ENCODE measurements at regions of chr11 and their contacts with region 1.

Region 1: GRCh38 chr11:18721561-18722292 is 4.3 kb downstream of the IGSF22 start:
- DNase-seq: no peak
- ATAC-seq: peak; percentile 91
- H3K4me3 ChIP-seq: peak overlapping the region; percentile 71
- H3K27ac ChIP-seq: no peak overlapping the region
- H3K4me1 ChIP-seq: peaks cover 9% of the 10 kb centered on the region
- H3K27me3 ChIP-seq: no peaks in the 10 kb centered on the region; a peak in 3 of 4 replicates
- CTCF ChIP-seq: peak; percentile 78 to 92 (median 87)
- EP300 ChIP-seq: no peak
- POLR2A ChIP-seq: no peak
- RAD21 ChIP-seq: peak; percentile 35

Region 2: DNA sequence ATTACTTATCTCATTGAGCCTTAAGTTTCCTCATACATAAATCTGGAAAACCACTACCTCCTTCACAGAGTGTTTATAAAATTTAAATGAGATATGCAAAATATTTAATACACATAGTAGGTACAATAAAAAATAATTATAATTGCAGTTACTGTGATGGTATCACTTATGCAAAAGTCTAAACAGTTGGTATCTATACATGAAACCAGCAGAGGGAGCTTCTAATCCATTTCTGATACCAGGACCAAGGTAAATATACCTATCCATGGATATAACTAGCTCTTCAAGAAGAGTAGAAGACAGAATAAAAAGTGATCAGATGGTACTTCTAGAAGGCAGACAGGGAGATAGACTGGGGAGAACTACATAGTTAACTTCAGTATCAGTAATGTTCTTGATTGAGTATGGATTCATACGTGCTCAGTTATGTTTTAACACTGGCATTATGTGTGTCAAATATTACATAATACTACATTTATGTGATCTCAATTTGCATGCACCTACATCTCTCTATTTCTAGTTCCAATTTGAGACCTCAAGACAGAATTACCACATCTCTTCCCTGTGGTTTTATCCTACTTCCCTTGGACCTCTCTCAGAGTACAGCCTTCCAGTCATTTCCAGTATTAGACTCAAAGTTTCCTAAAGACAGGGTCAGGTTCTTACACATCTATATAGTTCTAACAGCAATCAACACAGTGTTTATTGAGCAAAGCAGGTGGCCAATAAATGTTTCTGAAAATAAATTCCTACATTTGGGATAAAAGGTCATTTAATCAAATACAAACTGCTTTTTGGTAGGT is 181.3 kb before region 1 on chr11:
- CTCF ChIA-PET with region 1: interaction called, 36 read pairs
- POLR2A ChIA-PET with region 1: interaction called, 3 read pairs
- RAD21 ChIA-PET with region 1: interaction called, 26 read pairs
- SMC1A ChIA-PET with region 1: interaction called, 15 read pairs
- in situ Hi-C with region 1: no loop called
- intact Hi-C with region 1: no loop called
- DNase-seq: no peak
- ATAC-seq: peak; percentile 84
- H3K4me3 ChIP-seq: no peak overlapping the region
- H3K27ac ChIP-seq: no peak overlapping the region
- H3K4me1 ChIP-seq: no peaks in the 10 kb centered on the region
- H3K27me3 ChIP-seq: no peaks in the 10 kb centered on the region
- CTCF ChIP-seq: peak; percentile 46 to 69 (median 56)
- EP300 ChIP-seq: no peak
- POLR2A ChIP-seq: no peak
- RAD21 ChIP-seq: peak; percentile 66

Region 3: DNA sequence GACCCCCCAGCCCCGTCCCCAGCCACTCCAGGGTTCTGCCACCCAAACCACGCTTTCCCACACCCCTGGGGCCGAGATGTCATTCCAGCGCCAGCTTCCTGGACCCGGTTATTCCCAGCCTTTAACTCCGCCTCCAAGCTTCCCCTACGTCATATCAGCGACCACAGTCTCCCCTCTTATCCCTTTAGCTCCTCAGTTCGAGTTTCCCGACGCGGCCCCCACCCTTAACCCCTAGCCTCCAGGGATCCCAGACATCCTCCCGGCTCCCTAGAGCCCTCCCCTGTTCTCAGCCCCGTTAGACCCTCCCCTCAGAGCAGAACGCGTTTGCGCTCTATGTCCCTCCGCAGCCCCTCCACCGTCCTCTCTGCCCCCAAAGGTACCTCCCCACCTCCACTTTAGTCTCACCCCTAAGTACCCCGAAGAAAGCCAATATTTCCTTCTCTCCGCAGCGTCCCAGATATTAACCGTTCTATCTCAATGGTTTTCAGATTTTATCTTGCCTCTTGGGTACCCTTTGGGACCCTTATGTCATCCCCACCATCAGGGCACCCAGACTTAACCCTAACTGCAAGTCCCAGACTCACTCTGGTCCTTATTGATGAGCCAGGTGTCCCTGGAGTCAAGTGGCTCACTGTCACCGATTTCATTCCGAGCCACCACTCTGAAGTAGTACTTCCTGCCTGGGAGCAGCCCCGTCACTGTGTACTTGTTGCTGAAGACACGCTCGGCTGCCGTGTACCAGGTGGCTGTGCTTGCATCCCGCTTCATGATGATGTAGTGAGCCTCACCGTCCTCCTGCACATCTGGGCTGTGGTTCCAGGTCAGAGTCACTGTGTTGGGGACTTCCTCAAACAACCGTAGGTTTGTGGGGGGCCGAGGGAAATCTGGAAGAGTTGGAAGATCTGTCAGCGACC is 15.1 kb before region 1 on chr11:
- CTCF ChIA-PET with region 1: interaction called, 22 read pairs
- POLR2A ChIA-PET with region 1: interaction called, 3 read pairs
- RAD21 ChIA-PET with region 1: interaction called, 5 read pairs
- SMC1A ChIA-PET with region 1: interaction called, 3 read pairs
- in situ Hi-C with region 1: no loop called
- intact Hi-C with region 1: no loop called
- DNase-seq: no peak
- ATAC-seq: peak; percentile 55
- H3K4me3 ChIP-seq: no peak overlapping the region
- H3K27ac ChIP-seq: no peak overlapping the region
- H3K4me1 ChIP-seq: 0 out of 2 replicates have a peak, but pooled peaks cover 3% of the 10 kb centered on the region
- H3K27me3 ChIP-seq: peaks cover 6 to 10% of the 10 kb centered on the region in 2 experiments
- CTCF ChIP-seq: no peak
- EP300 ChIP-seq: no peak
- POLR2A ChIP-seq: no peak
- RAD21 ChIP-seq: no peak

Region 4: DNA sequence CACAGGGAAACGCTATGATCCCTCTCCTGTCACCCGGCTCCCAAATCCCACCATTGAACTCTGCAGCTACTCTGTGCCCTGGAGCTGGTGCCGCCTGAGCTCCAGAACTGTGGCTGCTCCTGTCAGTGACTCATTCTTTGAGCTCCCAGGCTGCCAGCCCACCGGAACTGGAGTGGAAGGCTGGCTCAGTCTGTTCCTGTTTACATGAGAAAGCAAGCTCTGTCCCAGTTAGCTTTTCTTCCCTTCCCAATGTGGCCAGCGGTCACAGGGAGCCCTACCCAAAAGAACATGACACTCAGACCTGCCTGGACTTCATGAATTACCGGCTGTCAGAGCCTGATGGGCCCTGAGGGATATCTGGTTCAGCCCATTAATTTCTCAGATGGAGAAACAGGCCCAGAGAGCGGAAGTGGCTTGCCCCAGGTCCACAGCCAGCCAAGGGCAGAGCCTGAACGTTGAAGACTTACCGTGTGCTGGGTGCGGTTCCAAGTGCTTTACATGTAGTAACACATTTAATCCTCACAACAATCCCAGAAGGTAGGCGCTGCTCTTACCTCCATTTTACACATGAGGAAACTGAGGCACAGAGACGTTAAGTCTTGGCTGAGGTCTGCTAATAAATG is 28.1 kb after region 1 on chr11:
- CTCF ChIA-PET with region 1: interaction called, 12 read pairs
- POLR2A ChIA-PET with region 1: no interaction called
- RAD21 ChIA-PET with region 1: interaction called, 3 read pairs
- SMC1A ChIA-PET with region 1: interaction called, 3 read pairs
- in situ Hi-C with region 1: no loop called
- intact Hi-C with region 1: no loop called
- DNase-seq: no peak
- ATAC-seq: no peak; the same call in 2 of the 3 replicates
- H3K4me3 ChIP-seq: no peak overlapping the region
- H3K27ac ChIP-seq: no peak overlapping the region
- H3K4me1 ChIP-seq: no peaks in the 10 kb centered on the region
- H3K27me3 ChIP-seq: no peaks in the 10 kb centered on the region; a peak in 1 of 4 replicates
- CTCF ChIP-seq: no peak
- EP300 ChIP-seq: no peak
- POLR2A ChIP-seq: no peak
- RAD21 ChIP-seq: no peak

Region 5: DNA sequence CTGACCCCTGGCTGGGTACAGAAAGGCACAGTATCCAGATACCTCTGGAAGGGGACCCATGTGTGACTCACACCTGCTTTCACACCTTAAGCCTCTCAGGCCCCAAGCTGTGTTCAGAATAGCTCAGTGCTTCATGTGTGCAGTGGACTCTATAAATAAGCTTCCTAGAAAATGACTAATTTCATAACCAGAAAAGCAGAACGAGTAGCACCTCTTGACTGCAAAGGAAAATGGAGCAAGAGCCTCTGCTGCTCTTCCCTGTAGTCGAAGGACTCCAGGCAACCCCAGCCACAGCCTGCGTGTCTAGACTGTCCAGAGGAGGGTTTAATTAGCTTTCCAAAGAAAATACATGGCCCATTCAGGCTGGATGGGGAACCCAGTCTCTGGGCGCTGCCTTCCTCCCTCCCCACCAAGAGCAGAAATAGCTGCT is 46.8 kb after region 1 on chr11:
- CTCF ChIA-PET with region 1: interaction called, 131 read pairs
- POLR2A ChIA-PET with region 1: interaction called, 4 read pairs
- RAD21 ChIA-PET with region 1: interaction called, 40 read pairs
- SMC1A ChIA-PET with region 1: interaction called, 44 read pairs
- in situ Hi-C with region 1: no loop called
- intact Hi-C with region 1: loop called (anchors 5 kb)
- DNase-seq: peak; percentile 77
- ATAC-seq: peak; percentile 80
- H3K4me3 ChIP-seq: no peak overlapping the region
- H3K27ac ChIP-seq: peak overlapping the region; percentile 35
- H3K4me1 ChIP-seq: peaks cover 38% of the 10 kb centered on the region
- H3K27me3 ChIP-seq: no peaks in the 10 kb centered on the region
- CTCF ChIP-seq: no peak
- EP300 ChIP-seq: peak; percentile 92 to 94
- POLR2A ChIP-seq: no peak
- RAD21 ChIP-seq: no peak

Region 6: GRCh38 chr11:18802381-18803257 is 80.9 kb after region 1 on chr11:
- CTCF ChIA-PET with region 1: interaction called, 25 read pairs
- POLR2A ChIA-PET with region 1: no interaction called
- RAD21 ChIA-PET with region 1: interaction called, 19 read pairs
- SMC1A ChIA-PET with region 1: interaction called, 4 read pairs
- in situ Hi-C with region 1: no loop called
- intact Hi-C with region 1: loop called (anchors 2 kb)
- DNase-seq: peak; percentile 12
- ATAC-seq: peak; percentile 80
- H3K4me3 ChIP-seq: no peak overlapping the region
- H3K27ac ChIP-seq: no peak overlapping the region
- H3K4me1 ChIP-seq: no peaks in the 10 kb centered on the region
- H3K27me3 ChIP-seq: peaks cover 0 to 9% of the 10 kb centered on the region in 2 experiments; a peak in 2 of 4 replicates
- CTCF ChIP-seq: peak; percentile 53 to 73 (median 71); a peak in 5 of 6 replicates
- EP300 ChIP-seq: no peak
- POLR2A ChIP-seq: no peak
- RAD21 ChIP-seq: peak; percentile 65

Region 7: GRCh38 chr11:18972336-18972735 is 250.6 kb after region 1 on chr11:
- CTCF ChIA-PET with region 1: no interaction called
- POLR2A ChIA-PET with region 1: no interaction called
- RAD21 ChIA-PET with region 1: no interaction called
- SMC1A ChIA-PET with region 1: no interaction called
- in situ Hi-C with region 1: no loop called
- intact Hi-C with region 1: no loop called
- DNase-seq: no peak
- ATAC-seq: no peak
- H3K4me3 ChIP-seq: no peak overlapping the region
- H3K27ac ChIP-seq: no peak overlapping the region
- H3K4me1 ChIP-seq: no peaks in the 10 kb centered on the region
- H3K27me3 ChIP-seq: no peaks in the 10 kb centered on the region; a peak in 1 of 4 replicates
- CTCF ChIP-seq: no peak
- EP300 ChIP-seq: no peak
- POLR2A ChIP-seq: no peak
- RAD21 ChIP-seq: no peak

Measured in GM12878 (cell line).